HEK293 (cell line): ENCODE measurements at regions of chr6 and their contacts with region 1.

Region 1: DNA sequence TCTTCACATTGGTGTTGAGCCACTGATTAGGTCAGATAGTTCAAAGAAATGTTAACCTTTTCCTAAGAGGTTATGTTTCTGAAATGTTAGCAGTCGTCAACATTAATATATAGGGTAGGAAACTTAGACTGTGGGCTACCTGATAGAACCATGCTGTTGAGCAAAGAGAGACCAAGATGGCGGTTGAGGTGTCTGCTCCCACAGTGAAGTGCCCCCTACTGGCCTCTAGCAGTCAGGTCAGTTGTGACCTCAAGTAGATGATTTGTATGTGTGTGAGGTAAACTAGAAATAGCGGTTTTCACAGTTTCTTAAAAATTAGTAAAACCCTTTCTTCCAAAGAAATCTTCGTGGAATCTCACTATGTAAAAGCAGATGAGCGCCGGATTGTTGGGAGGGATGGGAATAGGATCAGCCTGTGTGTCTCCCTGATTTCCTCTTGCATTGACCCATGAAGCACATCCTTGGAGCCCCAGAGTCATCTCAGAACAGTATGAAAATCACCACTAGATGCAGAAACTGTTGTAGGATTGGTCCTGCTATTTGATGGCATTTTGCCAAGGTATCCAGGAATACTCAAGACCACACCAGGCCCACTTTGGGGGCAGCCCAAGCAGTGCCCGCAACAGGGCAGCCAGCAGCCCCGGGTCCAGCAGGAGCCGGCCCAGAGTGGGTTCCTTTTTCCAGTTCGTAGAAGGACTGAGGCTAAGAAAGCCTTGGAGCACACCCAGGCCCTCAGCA is 40.4 kb downstream of the MTHFD1L start:
- H3K4me3 ChIP-seq: no peak overlapping the region
- H3K27ac ChIP-seq: no peak overlapping the region
- H3K4me1 ChIP-seq: no peaks in the 10 kb centered on the region
- CTCF ChIP-seq: no peak

Region 2: DNA sequence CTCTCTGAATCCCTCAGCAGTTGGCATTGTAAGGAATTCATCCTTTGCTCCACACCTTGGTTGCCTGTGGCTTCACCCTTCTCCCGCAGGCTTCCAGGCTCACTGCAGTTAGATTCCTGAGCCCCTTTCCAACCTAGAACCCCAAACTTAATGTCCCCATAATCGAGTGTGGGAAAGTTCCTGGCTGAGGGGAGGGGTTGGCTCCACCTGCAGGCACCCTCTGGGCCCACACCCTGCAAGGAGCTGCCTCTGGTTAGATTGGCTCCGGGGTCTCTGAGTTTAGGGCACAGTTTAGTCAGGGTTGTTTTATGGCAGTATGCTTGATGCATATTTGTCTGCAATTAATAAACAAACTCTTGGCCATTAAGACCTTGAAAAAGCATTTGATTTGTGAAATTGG is 22.9 kb after region 1 on chr6:
- CTCF ChIA-PET with region 1: interaction called, 12 read pairs
- POLR2A ChIA-PET with region 1: no interaction called
- H3K4me3 ChIP-seq: no peak overlapping the region
- H3K27ac ChIP-seq: no peak overlapping the region
- H3K4me1 ChIP-seq: no peaks in the 10 kb centered on the region
- CTCF ChIP-seq: 0 out of 2 replicates have a peak, but pooled peaks have one; percentile 16